Spleen (tissue), 13 donors: ENCODE measurements at regions of chr12 and their contacts with region 1.

Region 1: DNA sequence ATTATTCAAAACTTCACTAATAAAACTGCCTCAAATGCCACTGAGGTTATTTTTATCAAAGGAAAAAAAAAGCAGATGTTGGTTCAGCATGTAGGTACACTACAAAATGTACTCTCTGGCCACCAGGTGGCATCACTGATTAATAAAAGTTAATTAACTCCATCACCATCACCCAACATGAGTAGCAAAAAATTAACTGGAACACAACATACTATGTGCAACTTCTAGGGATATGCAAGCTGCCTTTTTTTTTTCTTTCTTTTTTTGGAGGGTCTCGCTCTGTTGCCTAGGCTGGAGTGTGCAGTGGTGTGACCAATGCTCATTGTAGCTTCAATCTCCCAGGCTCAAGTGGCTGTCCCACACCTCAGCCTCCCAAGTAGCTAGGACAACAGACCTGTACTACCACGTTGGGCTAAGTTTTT is 43.8 kb upstream of the NR2C1 start:
- DNase-seq: no peak
- H3K4me3 ChIP-seq: no peak overlapping the region
- H3K27ac ChIP-seq: peak overlapping the region in 3 of 8 donors; percentile 7 to 27 (median 23)
- H3K4me1 ChIP-seq: peaks cover 0 to 15% (median 5%) of the 10 kb centered on the region in 6 donors
- H3K27me3 ChIP-seq: no peaks in the 10 kb centered on the region
- CTCF ChIP-seq: peak; percentile 63 to 88 (median 76)
- POLR2A ChIP-seq: no peak

Region 2: GRCh38 chr12:95072900-95073697 is 44.1 kb before region 1 on chr12 and contains the start of gene NR2C1:
- intact Hi-C with region 1: no loop called
- DNase-seq: peak; percentile 97
- H3K4me3 ChIP-seq: peak within 1 kb of the TSS; percentile 85 to 100 (median 98)
- H3K27ac ChIP-seq: peak within 1 kb of the TSS; percentile 90 to 95 (median 92)
- H3K4me1 ChIP-seq: peaks cover 0 to 45% (median 24%) of the 10 kb centered on the region in 6 donors
- H3K27me3 ChIP-seq: no peaks in the 10 kb centered on the region
- CTCF ChIP-seq: no peak
- POLR2A ChIP-seq: no peak
- total RNA-seq, gene NR2C1: 30.2 to 133 (median 42.9) TPM

Region 3: GRCh38 chr12:95277139-95277538 is 159.9 kb after region 1 on chr12:
- intact Hi-C with region 1: no loop called
- DNase-seq: no peak
- H3K4me3 ChIP-seq: no peak overlapping the region
- H3K27ac ChIP-seq: no peak overlapping the region
- H3K4me1 ChIP-seq: no peaks in the 10 kb centered on the region
- H3K27me3 ChIP-seq: no peaks in the 10 kb centered on the region
- CTCF ChIP-seq: no peak
- POLR2A ChIP-seq: no peak

Region 4: DNA sequence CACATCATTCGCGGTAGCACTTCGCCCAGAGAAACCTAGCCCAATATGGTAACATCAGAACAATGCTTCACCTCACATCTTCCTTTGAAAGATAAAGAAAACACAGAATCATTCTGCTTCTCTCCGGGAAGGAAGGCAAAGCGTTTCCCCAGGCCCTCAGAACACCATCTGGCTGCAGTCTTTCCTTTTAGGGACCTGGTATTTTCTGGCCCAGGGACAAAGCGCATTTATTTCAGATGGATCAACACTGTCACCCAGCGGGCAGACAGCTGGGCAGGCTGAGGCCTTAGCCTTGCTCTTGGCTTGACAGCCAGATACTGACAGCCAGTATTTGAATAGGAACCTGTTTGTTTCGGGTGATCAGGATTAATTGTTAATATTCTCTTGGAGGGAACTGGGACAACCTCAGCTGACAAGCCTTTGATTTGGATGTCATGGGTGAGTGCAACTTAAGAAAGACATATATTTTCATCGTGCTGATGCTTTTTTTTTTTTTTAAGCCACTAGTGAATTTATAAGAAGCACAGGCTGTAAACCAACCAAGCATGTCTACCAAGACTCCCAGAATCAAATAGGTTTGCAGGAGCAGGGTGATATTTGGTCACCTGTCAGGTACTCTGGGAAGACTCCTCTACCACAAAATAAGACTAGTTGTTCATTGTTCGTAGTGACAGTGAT is 219.3 kb after region 1 on chr12:
- intact Hi-C with region 1: loop called (anchors 5 kb)
- DNase-seq: no peak
- H3K4me3 ChIP-seq: no peak overlapping the region
- H3K27ac ChIP-seq: peak overlapping the region in 1 of 8 donors; percentile 15
- H3K4me1 ChIP-seq: peaks cover 0 to 6% (median 0%) of the 10 kb centered on the region in 6 donors
- H3K27me3 ChIP-seq: no peaks in the 10 kb centered on the region
- CTCF ChIP-seq: peak; percentile 10 to 86 (median 63)
- POLR2A ChIP-seq: no peak

Region 5: GRCh38 chr12:95532851-95533250 is 415.7 kb after region 1 on chr12:
- intact Hi-C with region 1: loop called (anchors 5 kb)
- DNase-seq: no peak
- H3K4me3 ChIP-seq: no peak overlapping the region
- H3K27ac ChIP-seq: no peak overlapping the region
- H3K4me1 ChIP-seq: peaks cover 0 to 6% (median 0%) of the 10 kb centered on the region in 6 donors
- H3K27me3 ChIP-seq: no peaks in the 10 kb centered on the region
- CTCF ChIP-seq: no peak
- POLR2A ChIP-seq: no peak